Common myeloid progenitor, CD34-positive (primary cell): ENCODE measurements at regions of chr10 and their contacts with region 1.

Region 1: DNA sequence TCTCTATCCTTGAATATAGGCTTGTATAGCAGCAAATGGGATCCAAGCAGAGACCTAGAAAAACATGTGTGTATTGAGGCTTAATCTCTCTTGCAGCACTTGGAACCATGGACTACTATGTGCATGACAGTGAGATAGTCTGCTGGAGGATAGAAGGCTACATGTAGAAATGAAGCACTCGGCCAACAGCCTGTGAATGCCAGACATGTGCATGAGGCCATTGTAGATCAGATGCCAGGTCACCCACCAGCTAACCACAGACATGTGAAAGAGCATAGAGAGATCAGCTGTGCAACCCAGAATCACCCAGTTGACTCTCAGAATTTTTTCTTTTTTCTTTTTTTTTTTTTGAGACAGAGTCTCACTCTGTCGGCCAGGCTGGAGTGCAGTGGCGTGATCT is 90.9 kb downstream of the NT5C2 start:
- DNase-seq: no peak
- H3K4me3 ChIP-seq: no peak overlapping the region
- H3K27ac ChIP-seq: no peak overlapping the region
- H3K4me1 ChIP-seq: no peaks in the 10 kb centered on the region
- H3K27me3 ChIP-seq: no peaks in the 10 kb centered on the region

Region 2: GRCh38 chr10:103089493-103089892 is 12.7 kb before region 1 on chr10:
- CTCF ChIA-PET with region 1: interaction called, 12 read pairs
- POLR2A ChIA-PET with region 1: no interaction called
- DNase-seq: no peak
- H3K4me3 ChIP-seq: no peak overlapping the region
- H3K27ac ChIP-seq: no peak overlapping the region
- H3K4me1 ChIP-seq: no peaks in the 10 kb centered on the region
- H3K27me3 ChIP-seq: no peaks in the 10 kb centered on the region